Esophagus muscularis mucosa (tissue), 4 donors: ENCODE measurements at regions of chr6 and their contacts with region 1.

Region 1: DNA sequence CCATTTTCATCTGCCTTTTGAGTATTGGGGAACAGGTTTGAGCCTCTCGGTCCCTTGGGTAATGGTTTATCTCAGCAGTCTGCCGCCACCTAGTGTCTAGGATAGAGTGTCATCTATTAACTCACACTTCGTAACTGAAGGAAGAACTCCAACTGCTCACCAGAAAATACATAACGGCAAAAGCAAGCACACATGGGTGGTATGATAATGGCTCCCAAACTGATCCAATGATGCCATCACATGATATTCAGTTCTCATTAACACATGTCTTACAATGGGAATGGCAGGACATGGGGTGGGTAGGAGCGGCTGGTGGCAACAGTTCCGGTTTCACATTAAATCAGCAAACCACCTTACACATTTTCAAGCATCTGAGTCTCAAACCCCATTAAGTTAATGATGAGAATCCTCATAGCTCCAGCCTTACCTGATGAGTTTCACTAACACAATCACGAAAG is 110.7 kb upstream of the PHACTR1 start:
- DNase-seq: no peak
- H3K4me3 ChIP-seq: no peak overlapping the region
- H3K27ac ChIP-seq: no peak overlapping the region
- H3K4me1 ChIP-seq: peaks cover 0 to 23% (median 0%) of the 10 kb centered on the region in 4 donors
- H3K27me3 ChIP-seq: peaks cover 0 to 8% (median 0%) of the 10 kb centered on the region in 4 donors
- CTCF ChIP-seq: peak; percentile 63 to 69 (median 67)
- EP300 ChIP-seq: no peak
- POLR2A ChIP-seq: no peak

Region 2: GRCh38 chr6:11585426-11586016 is 1020.4 kb before region 1 on chr6:
- intact Hi-C with region 1: loop called (anchors 5 kb)
- DNase-seq: no peak
- H3K4me3 ChIP-seq: no peak overlapping the region
- H3K27ac ChIP-seq: no peak overlapping the region
- H3K4me1 ChIP-seq: peaks cover 0 to 17% (median 15%) of the 10 kb centered on the region in 4 donors
- H3K27me3 ChIP-seq: no peaks in the 10 kb centered on the region
- CTCF ChIP-seq: peak; percentile 54 to 60 (median 59)
- EP300 ChIP-seq: no peak
- POLR2A ChIP-seq: no peak

Region 3: DNA sequence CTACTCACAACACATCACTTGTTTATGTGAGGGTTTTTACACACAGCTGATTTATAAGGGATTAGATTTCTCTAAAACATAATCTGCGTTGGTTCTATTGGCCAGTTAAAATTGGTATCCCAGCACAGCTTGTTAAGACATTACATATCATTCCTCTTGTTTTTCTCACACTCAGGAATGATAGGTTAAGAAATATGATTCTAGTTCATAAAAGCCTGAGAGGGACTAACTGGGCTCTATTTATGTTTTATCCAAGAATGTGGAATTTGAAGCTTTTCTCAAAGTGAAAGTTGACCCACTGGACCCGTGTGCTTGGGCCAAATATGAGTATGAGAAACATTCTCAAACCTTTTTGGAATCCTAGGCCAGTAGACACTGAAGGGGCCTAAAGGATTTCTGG is 951.0 kb before region 1 on chr6:
- intact Hi-C with region 1: loop called (anchors 5 kb)
- DNase-seq: no peak
- H3K4me3 ChIP-seq: no peak overlapping the region
- H3K27ac ChIP-seq: no peak overlapping the region
- H3K4me1 ChIP-seq: peaks cover 28 to 42% (median 34%) of the 10 kb centered on the region in 4 donors
- H3K27me3 ChIP-seq: no peaks in the 10 kb centered on the region
- CTCF ChIP-seq: no peak
- EP300 ChIP-seq: no peak
- POLR2A ChIP-seq: no peak

Region 4: DNA sequence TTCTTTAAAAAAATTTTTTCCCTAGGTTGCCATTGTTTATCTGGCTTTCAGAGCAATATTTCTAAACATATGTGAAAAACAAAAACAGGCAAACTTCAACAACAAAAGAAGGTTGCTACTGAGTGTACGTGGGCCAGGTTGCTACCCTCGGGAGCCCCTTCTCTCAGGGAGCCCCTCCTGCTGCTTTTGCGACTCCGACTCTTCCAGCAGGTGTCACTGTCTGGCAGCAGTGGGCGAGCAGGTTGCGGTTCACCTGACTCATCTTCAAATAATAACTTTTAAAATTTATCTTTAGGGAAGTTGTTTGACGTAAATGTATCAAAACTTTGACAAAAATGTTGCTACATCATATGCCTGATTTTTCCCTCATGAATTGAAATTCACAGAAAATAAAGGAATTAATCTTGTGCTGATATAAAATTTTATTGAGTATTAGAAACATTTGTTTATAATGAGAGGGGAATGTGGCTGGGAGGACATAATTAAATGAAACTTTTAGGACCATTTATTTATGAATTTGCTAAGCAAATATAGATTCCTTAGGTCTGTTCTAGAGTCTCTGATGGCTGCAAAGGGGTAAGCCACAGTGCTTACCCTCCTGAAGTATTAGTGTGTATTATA is 455.0 kb before region 1 on chr6:
- intact Hi-C with region 1: loop called (anchors 10 kb)
- DNase-seq: no peak
- H3K4me3 ChIP-seq: no peak overlapping the region
- H3K27ac ChIP-seq: no peak overlapping the region
- H3K4me1 ChIP-seq: peaks cover 0 to 3% (median 0%) of the 10 kb centered on the region in 4 donors
- H3K27me3 ChIP-seq: no peaks in the 10 kb centered on the region
- CTCF ChIP-seq: peak in 2 of 3 experiments; percentile 25 to 29
- EP300 ChIP-seq: no peak
- POLR2A ChIP-seq: no peak

Region 5: DNA sequence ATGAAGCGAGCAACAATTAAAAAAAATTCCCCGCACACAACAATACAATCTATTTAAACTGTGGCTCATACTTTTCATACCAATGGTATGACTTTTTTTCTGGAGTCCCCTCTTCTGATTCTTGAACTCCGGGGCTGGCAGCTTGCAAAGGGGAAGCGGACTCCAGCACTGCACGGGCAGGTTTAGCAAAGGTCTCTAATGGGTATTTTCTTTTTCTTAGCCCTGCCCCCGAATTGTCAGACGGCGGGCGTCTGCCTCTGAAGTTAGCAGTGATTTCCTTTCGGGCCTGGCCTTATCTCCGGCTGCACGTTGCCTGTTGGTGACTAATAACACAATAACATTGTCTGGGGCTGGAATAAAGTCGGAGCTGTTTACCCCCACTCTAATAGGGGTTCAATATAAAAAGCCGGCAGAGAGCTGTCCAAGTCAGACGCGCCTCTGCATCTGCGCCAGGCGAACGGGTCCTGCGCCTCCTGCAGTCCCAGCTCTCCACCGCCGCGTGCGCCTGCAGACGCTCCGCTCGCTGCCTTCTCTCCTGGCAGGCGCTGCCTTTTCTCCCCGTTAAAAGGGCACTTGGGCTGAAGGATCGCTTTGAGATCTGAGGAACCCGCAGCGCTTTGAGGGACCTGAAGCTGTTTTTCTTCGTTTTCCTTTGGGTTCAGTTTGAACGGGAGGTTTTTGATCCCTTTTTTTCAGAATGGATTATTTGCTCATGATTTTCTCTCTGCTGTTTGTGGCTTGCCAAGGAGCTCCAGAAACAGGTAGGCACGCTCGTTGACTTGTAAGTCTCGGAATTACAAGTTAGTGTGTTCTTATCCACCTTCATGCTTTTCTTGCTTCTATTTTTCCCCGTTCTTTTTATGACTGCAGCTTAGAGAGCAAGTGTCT is 315.7 kb before region 1 on chr6 and contains the start of gene EDN1:
- intact Hi-C with region 1: loop called (anchors 2 kb)
- DNase-seq: no peak
- H3K4me3 ChIP-seq: peak within 1 kb of the TSS; percentile 50 to 66 (median 56)
- H3K27ac ChIP-seq: peak within 1 kb of the TSS; percentile 53 to 74 (median 66)
- H3K4me1 ChIP-seq: peaks cover 7 to 25% (median 25%) of the 10 kb centered on the region in 4 donors
- H3K27me3 ChIP-seq: peaks cover 0 to 22% (median 0%) of the 10 kb centered on the region in 4 donors
- CTCF ChIP-seq: peak in 2 of 3 experiments; percentile 37 to 70
- EP300 ChIP-seq: no peak
- POLR2A ChIP-seq: no peak
- total RNA-seq, gene EDN1: 5.4 to 29.1 (median 23.0) TPM

Region 6: GRCh38 chr6:12395898-12396297 is 210.0 kb before region 1 on chr6:
- intact Hi-C with region 1: loop called (anchors 5 kb)
- DNase-seq: no peak
- H3K4me3 ChIP-seq: no peak overlapping the region
- H3K27ac ChIP-seq: no peak overlapping the region
- H3K4me1 ChIP-seq: peaks cover 2 to 13% (median 5%) of the 10 kb centered on the region in 4 donors
- H3K27me3 ChIP-seq: no peaks in the 10 kb centered on the region
- CTCF ChIP-seq: peak in 1 of 3 experiments; percentile 22
- EP300 ChIP-seq: no peak
- POLR2A ChIP-seq: no peak

Region 7: GRCh38 chr6:12572896-12573827 is 32.8 kb before region 1 on chr6:
- intact Hi-C with region 1: no loop called
- DNase-seq: no peak
- H3K4me3 ChIP-seq: no peak overlapping the region
- H3K27ac ChIP-seq: no peak overlapping the region
- H3K4me1 ChIP-seq: peaks cover 10 to 30% (median 21%) of the 10 kb centered on the region in 4 donors
- H3K27me3 ChIP-seq: no peaks in the 10 kb centered on the region
- CTCF ChIP-seq: no peak
- EP300 ChIP-seq: no peak
- POLR2A ChIP-seq: no peak